ENCODE measurements at regions of chr4 and their contacts with region 1.

Region 1: GRCh38 chr4:121252224-121252806 is 88.2 kb upstream of the TNIP3 start:
- DNase-seq: peak; percentile 58
- H3K4me3 Mint-ChIP-seq: no peak overlapping the region
- H3K27ac Mint-ChIP-seq: no peak overlapping the region
- H3K4me1 Mint-ChIP-seq: no peaks in the 10 kb centered on the region
- H3K27me3 Mint-ChIP-seq: no peaks in the 10 kb centered on the region
- CTCF ChIP-seq: peak; percentile 20

Region 2: DNA sequence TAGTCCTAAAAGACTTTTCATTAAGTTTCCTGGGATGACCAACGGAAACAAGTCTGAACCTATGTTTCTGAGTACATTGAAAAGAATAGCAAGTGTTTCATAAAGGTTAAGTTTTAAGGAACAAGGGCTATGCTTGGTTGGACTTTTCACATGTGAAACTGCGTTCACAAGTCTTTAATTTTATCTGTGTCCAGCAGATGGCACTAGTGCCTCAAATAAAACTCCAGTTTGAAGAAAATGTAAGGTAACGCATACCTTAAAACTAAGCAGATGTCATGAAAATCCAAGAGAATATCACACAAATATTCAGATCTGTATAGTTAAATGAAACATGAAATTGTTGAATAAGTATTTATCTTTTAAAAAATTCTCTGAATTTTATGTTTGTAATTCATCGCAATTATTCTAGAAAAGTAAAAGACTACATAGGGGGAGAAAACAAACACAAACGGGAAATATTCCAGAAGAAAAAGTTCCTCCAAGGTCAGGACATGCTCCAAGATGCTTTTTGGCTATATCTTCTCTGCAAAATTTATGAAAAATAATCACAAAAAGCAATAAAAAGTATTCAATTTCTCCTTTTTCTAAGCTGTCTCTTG is 1096.1 kb before region 1 on chr4:
- CTCF ChIA-PET with region 1: no interaction called
- intact Hi-C with region 1: loop called (anchors 1 kb)
- DNase-seq: peak; percentile 43
- H3K4me3 Mint-ChIP-seq: no peak overlapping the region
- H3K27ac Mint-ChIP-seq: no peak overlapping the region
- H3K4me1 Mint-ChIP-seq: no peaks in the 10 kb centered on the region
- H3K27me3 Mint-ChIP-seq: no peaks in the 10 kb centered on the region
- CTCF ChIP-seq: no peak

Region 3: DNA sequence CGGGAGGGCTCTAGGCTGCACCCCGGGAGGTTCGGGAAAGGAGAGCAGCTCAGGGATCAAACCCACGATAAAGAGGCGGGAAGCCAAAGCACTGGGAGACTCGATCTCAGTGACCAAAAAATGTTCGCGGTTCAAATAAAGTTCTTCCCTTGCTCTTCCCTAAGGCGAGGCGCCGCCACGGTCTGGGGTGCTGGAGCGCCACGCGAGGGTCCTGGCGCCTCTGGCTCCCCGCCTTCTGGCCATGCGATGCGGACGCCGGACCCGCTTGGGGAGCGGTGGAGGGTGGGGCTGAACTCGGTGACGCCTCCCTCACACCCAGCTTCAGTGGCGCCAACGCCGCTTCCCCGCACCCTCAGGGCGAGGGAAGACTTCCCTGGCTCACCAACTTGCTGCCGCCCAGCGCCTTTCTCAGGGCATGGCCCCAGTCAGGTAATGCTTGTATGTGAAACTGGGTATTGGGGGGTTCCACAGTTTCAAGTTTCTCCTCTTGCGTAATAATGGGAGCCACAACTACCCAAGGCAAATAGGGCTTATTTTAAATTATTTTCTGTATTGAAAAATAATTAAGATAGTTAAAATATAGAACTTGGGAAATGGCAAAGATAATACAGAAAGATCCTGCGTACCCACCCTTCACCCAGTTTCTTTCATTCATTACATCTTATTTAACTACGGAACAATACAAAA is 128.6 kb after region 1 on chr4 and contains the start of gene QRFPR:
- CTCF ChIA-PET with region 1: no interaction called
- intact Hi-C with region 1: no loop called
- DNase-seq: peak; percentile 47
- H3K4me3 Mint-ChIP-seq: peak within 1 kb of the TSS; percentile 69
- H3K27ac Mint-ChIP-seq: peak within 1 kb of the TSS; percentile 17
- H3K4me1 Mint-ChIP-seq: peaks cover 19% of the 10 kb centered on the region
- H3K27me3 Mint-ChIP-seq: no peaks in the 10 kb centered on the region
- CTCF ChIP-seq: no peak
- total RNA-seq, gene QRFPR: 1.0 TPM in 1 of 2 replicates, not detected in the other

Region 4: GRCh38 chr4:121900132-121900983 is 648.0 kb after region 1 on chr4:
- CTCF ChIA-PET with region 1: no interaction called
- intact Hi-C with region 1: no loop called
- DNase-seq: peak; percentile 39
- H3K4me3 Mint-ChIP-seq: no peak overlapping the region
- H3K27ac Mint-ChIP-seq: no peak overlapping the region
- H3K4me1 Mint-ChIP-seq: no peaks in the 10 kb centered on the region
- H3K27me3 Mint-ChIP-seq: no peaks in the 10 kb centered on the region
- CTCF ChIP-seq: no peak

Measured in Calu3 (cell line).